Heart right ventricle (tissue), 16 donors: ENCODE measurements at regions of chr2 and their contacts with region 1.

Region 1: GRCh38 chr2:28821295-28821958 is 10.8 kb downstream of the SPDYA start:
- DNase-seq: peak in 1 of 2 donors; percentile 47
- ATAC-seq: peak in 5 of 8 donors; percentile 46 to 67 (median 65)
- H3K4me3 ChIP-seq: no peak overlapping the region
- H3K27ac ChIP-seq: no peak overlapping the region
- H3K4me1 ChIP-seq: peaks cover 0 to 6% (median 0%) of the 10 kb centered on the region in 9 donors
- H3K27me3 ChIP-seq: no peaks in the 10 kb centered on the region
- CTCF ChIP-seq: peak; percentile 50 to 79 (median 70)

Region 2: GRCh38 chr2:28406276-28407096 is 414.9 kb before region 1 on chr2:
- intact Hi-C with region 1: no loop called
- DNase-seq: peak in 1 of 2 donors; percentile 49
- ATAC-seq: peak in 7 of 8 donors; percentile 15 to 49 (median 24)
- H3K4me3 ChIP-seq: peak overlapping the region in 1 of 10 donors; percentile 3
- H3K27ac ChIP-seq: peak overlapping the region in 7 of 10 donors; percentile 23 to 87 (median 53)
- H3K4me1 ChIP-seq: peaks cover 0 to 98% (median 44%) of the 10 kb centered on the region in 9 donors
- H3K27me3 ChIP-seq: no peaks in the 10 kb centered on the region
- CTCF ChIP-seq: no peak

Region 3: GRCh38 chr2:28782440-28782839 is 39.0 kb before region 1 on chr2:
- intact Hi-C with region 1: loop called in 1 of 10 experiments (anchors 1 kb)
- DNase-seq: no peak
- ATAC-seq: no peak
- H3K4me3 ChIP-seq: no peak overlapping the region
- H3K27ac ChIP-seq: no peak overlapping the region
- H3K4me1 ChIP-seq: peaks cover 0 to 13% (median 3%) of the 10 kb centered on the region in 9 donors
- H3K27me3 ChIP-seq: no peaks in the 10 kb centered on the region
- CTCF ChIP-seq: no peak

Region 4: GRCh38 chr2:28981016-28981441 is 159.6 kb after region 1 on chr2 and contains the start of gene TOGARAM2:
- intact Hi-C with region 1: no loop called
- DNase-seq: peak; percentile 20 to 40
- ATAC-seq: peak; percentile 23 to 81 (median 60)
- H3K4me3 ChIP-seq: no peak within 1 kb of the TSS
- H3K27ac ChIP-seq: peak within 1 kb of the TSS in 8 of 10 donors; percentile 4 to 79 (median 68)
- H3K4me1 ChIP-seq: peaks cover 0 to 32% (median 7%) of the 10 kb centered on the region in 9 donors
- H3K27me3 ChIP-seq: no peaks in the 10 kb centered on the region
- CTCF ChIP-seq: no peak
- total RNA-seq, gene TOGARAM2: 1.4 to 56.7 (median 14.6) TPM

Region 5: GRCh38 chr2:29196792-29197788 is 375.7 kb after region 1 on chr2:
- intact Hi-C with region 1: loop called in 4 of 10 experiments (anchors 10 kb)
- DNase-seq: peak; percentile 46 to 62
- ATAC-seq: peak; percentile 67 to 90 (median 83)
- H3K4me3 ChIP-seq: no peak overlapping the region
- H3K27ac ChIP-seq: no peak overlapping the region
- H3K4me1 ChIP-seq: peaks cover 0 to 9% (median 0%) of the 10 kb centered on the region in 9 donors
- H3K27me3 ChIP-seq: no peaks in the 10 kb centered on the region
- CTCF ChIP-seq: peak; percentile 46 to 90 (median 82)

Region 6: DNA sequence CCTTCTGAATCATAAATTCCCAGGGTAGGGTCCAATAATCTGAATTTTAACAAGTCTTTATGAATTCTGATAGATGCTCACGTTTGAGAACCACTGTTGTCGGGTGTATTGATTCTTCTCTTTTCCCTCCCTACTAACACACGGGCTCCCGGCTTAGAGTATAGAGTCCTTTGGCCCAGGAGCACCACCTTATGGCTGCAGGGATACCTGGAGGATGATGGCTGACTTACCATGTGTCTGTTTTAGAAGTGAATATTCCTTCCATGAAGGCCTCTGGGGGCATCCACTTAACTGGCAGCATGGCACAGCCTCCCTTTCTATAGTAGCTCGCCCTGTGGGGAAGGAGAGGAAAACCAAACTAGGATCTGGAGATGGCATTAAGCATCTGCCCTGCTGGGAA is 385.5 kb after region 1 on chr2:
- intact Hi-C with region 1: loop called in 1 of 10 experiments (anchors 10 kb)
- DNase-seq: no peak
- ATAC-seq: no peak
- H3K4me3 ChIP-seq: no peak overlapping the region
- H3K27ac ChIP-seq: no peak overlapping the region
- H3K4me1 ChIP-seq: no peaks in the 10 kb centered on the region
- H3K27me3 ChIP-seq: no peaks in the 10 kb centered on the region
- CTCF ChIP-seq: no peak